ENCODE measurements at regions of chr5 and their contacts with region 1.

Region 1: GRCh38 chr5:151825445-151825844 is 53.7 kb downstream of the G3BP1 start:
- DNase-seq: peak; percentile 13 to 59 (median 45)
- H3K4me3 ChIP-seq: no peak overlapping the region
- H3K27ac ChIP-seq: no peak overlapping the region
- H3K4me1 ChIP-seq: no peaks in the 10 kb centered on the region
- H3K27me3 ChIP-seq: no peaks in the 10 kb centered on the region
- CTCF ChIP-seq: peak; percentile 53 to 82 (median 54)
- EP300 ChIP-seq: no peak
- POLR2A ChIP-seq: no peak

Region 2: DNA sequence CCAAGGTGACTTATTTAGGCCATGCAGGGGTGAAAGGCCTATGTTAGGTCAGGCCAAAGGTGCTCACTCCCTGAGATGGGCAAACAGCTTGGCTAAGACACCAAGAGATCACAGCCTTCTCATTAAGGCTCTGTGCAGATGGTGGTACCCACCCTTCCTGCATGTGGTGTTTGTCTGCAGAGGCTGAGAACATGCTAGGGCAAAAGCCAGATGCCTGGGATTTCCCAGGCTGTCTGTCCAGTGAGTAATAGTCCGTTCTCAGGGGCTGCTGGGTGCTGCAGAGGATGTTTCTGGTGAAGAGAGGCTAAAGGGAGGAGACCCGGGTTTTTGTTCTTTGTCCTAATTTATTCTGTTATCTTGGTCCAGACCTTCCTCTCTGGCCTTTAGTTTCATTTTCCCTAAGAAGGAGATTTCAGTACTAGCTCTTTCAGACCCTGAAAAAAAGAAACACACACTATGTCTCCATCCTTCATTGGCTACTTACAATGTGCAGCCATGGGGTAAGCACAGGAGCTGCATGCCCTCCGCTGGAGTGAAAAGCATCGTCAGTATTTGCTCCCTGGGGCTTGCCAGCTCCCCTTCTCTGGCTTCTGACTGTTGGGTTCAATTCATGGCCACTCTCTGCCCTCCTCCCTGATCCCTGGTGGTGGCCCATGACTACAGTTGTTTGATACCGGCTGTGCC is 122.6 kb after region 1 on chr5:
- intact Hi-C with region 1: no loop called
- DNase-seq: no peak
- H3K4me3 ChIP-seq: no peak overlapping the region
- H3K27ac ChIP-seq: no peak overlapping the region
- H3K4me1 ChIP-seq: no peaks in the 10 kb centered on the region
- H3K27me3 ChIP-seq: no peaks in the 10 kb centered on the region
- CTCF ChIP-seq: no peak
- EP300 ChIP-seq: no peak
- POLR2A ChIP-seq: no peak

Region 3: DNA sequence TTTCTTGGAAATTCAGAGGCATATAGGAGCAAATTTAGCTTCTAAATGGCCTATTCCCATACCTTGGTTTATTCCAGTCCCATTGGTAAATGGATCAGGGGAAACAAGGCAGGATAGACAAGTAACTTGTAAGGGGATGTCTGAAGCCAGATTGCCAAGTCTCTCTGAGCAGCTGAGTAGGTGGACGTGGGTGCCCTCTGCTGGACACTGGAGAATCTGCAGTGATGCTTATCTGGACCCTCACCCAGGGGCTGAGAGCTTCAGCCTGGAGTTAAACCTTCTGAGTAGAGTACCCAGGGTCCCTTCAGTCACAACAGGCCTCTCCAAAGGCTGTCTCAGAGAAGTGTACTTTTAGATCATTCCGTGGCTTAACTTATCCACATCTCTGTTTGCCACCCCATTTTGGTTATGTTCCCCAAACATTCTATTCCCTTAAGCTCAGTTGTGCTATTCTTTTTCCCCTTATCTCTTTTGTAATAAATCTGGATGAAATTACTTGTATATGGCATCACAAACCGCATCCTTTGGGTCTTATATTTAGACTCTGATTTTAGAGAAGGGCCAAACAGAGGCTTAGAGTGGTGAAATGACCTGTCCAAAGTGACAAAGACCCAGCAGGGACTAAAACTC is 317.5 kb after region 1 on chr5:
- intact Hi-C with region 1: loop called in 2 of 4 experiments (anchors 5 to 10 kb)
- DNase-seq: peak; percentile 8 to 53 (median 40)
- H3K4me3 ChIP-seq: no peak overlapping the region
- H3K27ac ChIP-seq: no peak overlapping the region
- H3K4me1 ChIP-seq: peaks cover 7% of the 10 kb centered on the region
- H3K27me3 ChIP-seq: no peaks in the 10 kb centered on the region
- CTCF ChIP-seq: peak in 1 of 3 donors; percentile 35
- EP300 ChIP-seq: no peak
- POLR2A ChIP-seq: no peak

Region 4: DNA sequence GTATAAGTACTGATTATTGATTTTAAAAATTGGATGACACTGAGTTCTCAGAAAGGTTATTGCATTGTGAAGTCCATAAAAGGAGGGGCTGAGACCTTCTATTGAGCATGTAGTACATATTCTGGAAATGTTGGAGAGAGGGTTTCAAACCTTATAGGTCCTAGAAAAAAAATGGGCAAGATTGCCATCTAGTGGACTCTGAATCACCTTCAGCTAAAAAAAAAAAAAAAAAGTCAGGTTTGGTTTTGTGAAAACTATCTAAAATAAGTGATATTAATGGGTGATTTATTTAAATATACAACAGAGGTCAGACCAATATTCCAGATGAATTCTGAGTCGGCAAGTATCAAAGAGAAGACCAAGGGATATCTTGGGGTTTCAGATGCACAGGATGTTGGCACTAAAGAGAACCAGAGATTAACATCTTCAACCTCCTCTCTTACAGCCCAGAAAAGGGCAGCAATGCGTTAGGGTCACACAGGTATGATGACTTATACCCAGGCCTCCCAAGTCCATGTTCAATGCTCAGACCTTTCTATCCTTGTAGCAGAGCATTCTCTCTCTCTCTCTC is 689.5 kb after region 1 on chr5:
- intact Hi-C with region 1: loop called in 1 of 4 experiments (anchors 10 kb)
- DNase-seq: no peak
- H3K4me3 ChIP-seq: no peak overlapping the region
- H3K27ac ChIP-seq: no peak overlapping the region
- H3K4me1 ChIP-seq: no peaks in the 10 kb centered on the region
- H3K27me3 ChIP-seq: no peaks in the 10 kb centered on the region
- CTCF ChIP-seq: no peak
- EP300 ChIP-seq: no peak
- POLR2A ChIP-seq: no peak

Measured in ovary (tissue), 10 donors.